CD8-positive, alpha-beta T cell (primary cell): ENCODE measurements at regions of chr6 and their contacts with region 1.

Region 1: DNA sequence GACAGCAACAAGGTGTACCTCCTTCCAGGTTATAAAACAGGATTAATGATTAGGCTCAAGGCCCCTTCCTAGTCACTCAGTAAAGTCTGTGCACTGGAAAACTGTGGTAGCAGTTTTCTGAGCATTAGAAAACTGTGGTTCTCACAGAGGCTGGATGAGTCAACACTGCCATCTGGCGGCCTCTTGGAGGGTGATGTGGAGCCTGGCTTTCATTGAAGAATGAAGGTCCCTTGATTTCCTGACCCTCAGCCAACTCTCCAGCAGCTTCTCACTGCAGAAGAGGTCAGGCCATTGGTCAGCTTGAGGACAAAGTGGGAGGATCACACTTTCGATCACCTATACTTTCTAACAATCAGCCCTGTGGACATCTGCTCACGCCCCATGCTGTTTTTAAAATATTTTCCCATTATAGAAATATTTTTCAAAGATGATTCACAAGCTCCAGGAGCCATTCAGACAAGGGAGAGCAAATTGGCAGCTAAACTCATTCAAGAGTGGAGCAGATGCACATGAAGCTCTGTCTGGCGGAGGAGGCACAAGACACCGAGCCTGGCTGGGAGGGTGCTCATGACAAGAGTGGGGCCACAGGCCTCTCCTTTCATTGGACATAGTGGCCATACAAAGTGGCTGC is 23.2 kb downstream of the PSMB1 start:
- DNase-seq: peak; percentile 39 to 77 (median 69)
- ATAC-seq: peak; percentile 77
- H3K4me3 ChIP-seq: no peak overlapping the region
- H3K4me3 Mint-ChIP-seq: no peak overlapping the region
- H3K27ac ChIP-seq: no peak overlapping the region
- H3K27ac Mint-ChIP-seq: no peak overlapping the region
- H3K4me1 ChIP-seq: no peaks in the 10 kb centered on the region
- H3K4me1 Mint-ChIP-seq: peaks cover 2% of the 10 kb centered on the region
- H3K27me3 ChIP-seq: no peaks in the 10 kb centered on the region
- H3K27me3 Mint-ChIP-seq: no peaks in the 10 kb centered on the region
- CTCF ChIP-seq: peak; percentile 84

Region 2: GRCh38 chr6:168895102-168895812 is 1634.7 kb before region 1 on chr6:
- CTCF ChIA-PET with region 1: interaction called, 8 read pairs
- POLR2A ChIA-PET with region 1: no interaction called
- intact Hi-C with region 1: loop called in 1 of 2 experiments (anchors 1 kb)
- DNase-seq: peak; percentile 52 to 91 (median 78)
- ATAC-seq: peak; percentile 98
- H3K4me3 ChIP-seq: peak overlapping the region; percentile 8 to 16
- H3K4me3 Mint-ChIP-seq: peak overlapping the region; percentile 57
- H3K27ac ChIP-seq: no peak overlapping the region
- H3K27ac Mint-ChIP-seq: peak overlapping the region; percentile 69
- H3K4me1 ChIP-seq: peaks cover 7% of the 10 kb centered on the region
- H3K4me1 Mint-ChIP-seq: peaks cover 17% of the 10 kb centered on the region
- H3K27me3 ChIP-seq: no peaks in the 10 kb centered on the region
- H3K27me3 Mint-ChIP-seq: peaks cover 4% of the 10 kb centered on the region
- CTCF ChIP-seq: peak; percentile 81

Region 3: GRCh38 chr6:169420912-169421543 is 1108.9 kb before region 1 on chr6:
- CTCF ChIA-PET with region 1: no interaction called
- POLR2A ChIA-PET with region 1: no interaction called
- intact Hi-C with region 1: loop called in 1 of 2 experiments (anchors 10 kb)
- DNase-seq: no peak
- ATAC-seq: no peak
- H3K4me3 ChIP-seq: no peak overlapping the region
- H3K4me3 Mint-ChIP-seq: no peak overlapping the region
- H3K27ac ChIP-seq: no peak overlapping the region
- H3K27ac Mint-ChIP-seq: no peak overlapping the region
- H3K4me1 ChIP-seq: no peaks in the 10 kb centered on the region
- H3K4me1 Mint-ChIP-seq: no peaks in the 10 kb centered on the region
- H3K27me3 ChIP-seq: no peaks in the 10 kb centered on the region
- H3K27me3 Mint-ChIP-seq: peaks cover 7% of the 10 kb centered on the region
- CTCF ChIP-seq: peak; percentile 32

Region 4: DNA sequence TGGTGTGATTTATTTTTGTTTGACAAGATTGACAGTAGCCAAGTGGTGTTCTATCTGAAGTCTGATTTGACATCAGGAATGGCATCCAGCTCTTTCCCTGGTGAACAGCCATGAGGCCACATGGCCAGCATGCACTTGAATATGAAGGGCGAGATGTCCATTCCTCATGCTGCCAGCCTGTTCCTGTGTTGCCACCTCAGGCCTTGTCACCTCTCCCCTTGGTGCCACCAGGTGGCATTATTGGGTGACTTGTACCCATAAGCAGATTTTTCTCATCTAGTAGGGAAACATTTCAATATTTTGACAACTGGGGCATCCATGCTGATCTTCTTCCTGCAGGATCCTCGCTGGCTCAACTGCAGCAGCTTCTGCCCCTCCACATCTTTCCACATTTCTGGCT is 579.4 kb before region 1 on chr6:
- CTCF ChIA-PET with region 1: interaction called, 7 read pairs
- POLR2A ChIA-PET with region 1: no interaction called
- intact Hi-C with region 1: loop called (anchors 1 to 5 kb)
- DNase-seq: peak in 7 of 9 experiments; percentile 16 to 69 (median 51)
- ATAC-seq: peak; percentile 40
- H3K4me3 ChIP-seq: no peak overlapping the region
- H3K4me3 Mint-ChIP-seq: no peak overlapping the region
- H3K27ac ChIP-seq: no peak overlapping the region
- H3K27ac Mint-ChIP-seq: no peak overlapping the region
- H3K4me1 ChIP-seq: no peaks in the 10 kb centered on the region
- H3K4me1 Mint-ChIP-seq: no peaks in the 10 kb centered on the region
- H3K27me3 ChIP-seq: no peaks in the 10 kb centered on the region
- H3K27me3 Mint-ChIP-seq: no peaks in the 10 kb centered on the region
- CTCF ChIP-seq: peak; percentile 53

Region 5: DNA sequence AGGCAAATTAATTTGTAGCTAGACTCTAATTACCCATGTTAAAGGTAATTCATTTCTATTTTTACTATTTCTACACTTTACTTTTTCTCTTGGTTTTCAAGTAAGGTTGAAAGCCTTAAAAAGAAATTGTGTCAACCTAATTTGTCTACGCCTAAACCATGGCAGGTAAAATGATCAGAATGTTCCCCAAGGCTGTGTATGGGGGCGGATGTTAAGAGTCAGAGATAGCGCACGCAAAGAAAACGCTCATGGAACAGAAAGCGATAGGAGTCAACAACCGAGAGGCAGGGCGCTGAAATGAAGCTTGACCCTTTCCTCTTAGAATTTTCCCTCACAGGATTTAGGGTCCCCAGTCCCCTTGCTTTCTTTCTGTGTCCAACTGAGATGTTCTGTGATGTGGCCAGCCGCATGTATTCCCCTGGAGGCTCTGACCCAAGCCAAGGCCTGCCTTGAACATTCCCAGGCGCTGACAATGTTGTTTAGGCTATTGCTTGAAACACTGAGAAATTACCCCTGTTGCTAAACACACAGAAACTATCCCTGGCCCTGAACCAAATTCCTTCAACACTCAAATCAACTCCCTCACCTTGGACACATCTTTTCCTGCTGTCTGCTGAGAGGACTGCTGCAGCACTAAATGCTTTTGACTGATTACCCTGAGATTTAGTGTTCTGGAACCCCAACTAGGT is 12.2 kb after region 1 on chr6:
- CTCF ChIA-PET with region 1: interaction called, 42 read pairs
- POLR2A ChIA-PET with region 1: no interaction called
- intact Hi-C with region 1: no loop called
- DNase-seq: no peak
- ATAC-seq: no peak
- H3K4me3 ChIP-seq: no peak overlapping the region
- H3K4me3 Mint-ChIP-seq: no peak overlapping the region
- H3K27ac ChIP-seq: no peak overlapping the region
- H3K27ac Mint-ChIP-seq: peak overlapping the region; percentile 22
- H3K4me1 ChIP-seq: no peaks in the 10 kb centered on the region
- H3K4me1 Mint-ChIP-seq: peaks cover 29% of the 10 kb centered on the region
- H3K27me3 ChIP-seq: no peaks in the 10 kb centered on the region
- H3K27me3 Mint-ChIP-seq: no peaks in the 10 kb centered on the region
- CTCF ChIP-seq: no peak